IMR-90 (cell line): ENCODE measurements at regions of chr22 and their contacts with region 1.

Region 1: DNA sequence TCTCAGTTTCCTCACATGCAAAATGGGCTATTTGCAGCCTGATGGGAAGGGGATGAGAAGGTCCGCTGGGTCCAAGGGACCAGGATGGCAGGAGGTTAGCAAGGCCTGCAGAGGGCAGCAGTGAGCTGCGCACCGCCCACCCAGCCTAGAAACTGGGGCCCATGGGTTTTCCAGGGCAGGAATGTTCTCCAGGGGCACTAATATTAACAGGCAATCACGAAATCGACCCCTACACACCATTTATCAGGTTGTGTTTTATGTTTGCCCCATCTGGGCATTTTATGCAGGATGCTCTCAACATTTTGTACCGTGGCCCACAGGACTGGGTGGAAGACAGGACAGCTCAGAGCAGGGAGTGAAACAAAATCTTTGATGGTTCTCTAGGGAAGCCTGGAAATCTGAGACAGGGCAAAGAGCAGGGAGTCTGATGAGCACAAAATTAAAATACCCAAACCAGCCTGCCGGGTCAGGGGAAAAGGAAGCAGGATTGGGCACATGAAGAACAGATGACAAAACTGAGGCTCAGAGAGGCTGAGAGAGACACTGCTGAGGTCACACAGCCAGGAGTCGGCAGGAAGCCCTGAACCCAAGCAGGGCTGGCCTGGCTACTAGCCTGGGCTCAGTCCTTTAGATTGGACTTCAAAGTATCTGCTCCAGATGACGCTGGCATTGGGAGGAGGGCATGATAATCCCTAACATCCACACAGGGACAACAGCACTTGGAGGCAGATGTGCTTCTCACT is 1.6 kb upstream of the BCR start:
- DNase-seq: peak; percentile 38
- ATAC-seq: peak; percentile 53
- H3K4me3 ChIP-seq: no peak overlapping the region
- H3K27ac ChIP-seq: no peak overlapping the region
- H3K4me1 ChIP-seq: peaks cover 27% of the 10 kb centered on the region
- H3K27me3 ChIP-seq: no peaks in the 10 kb centered on the region
- CTCF ChIP-seq: peak; percentile 96
- POLR2A ChIP-seq: 0 out of 2 replicates have a peak, but pooled peaks have one; percentile 46
- RAD21 ChIP-seq: peak; percentile 99

Region 2: DNA sequence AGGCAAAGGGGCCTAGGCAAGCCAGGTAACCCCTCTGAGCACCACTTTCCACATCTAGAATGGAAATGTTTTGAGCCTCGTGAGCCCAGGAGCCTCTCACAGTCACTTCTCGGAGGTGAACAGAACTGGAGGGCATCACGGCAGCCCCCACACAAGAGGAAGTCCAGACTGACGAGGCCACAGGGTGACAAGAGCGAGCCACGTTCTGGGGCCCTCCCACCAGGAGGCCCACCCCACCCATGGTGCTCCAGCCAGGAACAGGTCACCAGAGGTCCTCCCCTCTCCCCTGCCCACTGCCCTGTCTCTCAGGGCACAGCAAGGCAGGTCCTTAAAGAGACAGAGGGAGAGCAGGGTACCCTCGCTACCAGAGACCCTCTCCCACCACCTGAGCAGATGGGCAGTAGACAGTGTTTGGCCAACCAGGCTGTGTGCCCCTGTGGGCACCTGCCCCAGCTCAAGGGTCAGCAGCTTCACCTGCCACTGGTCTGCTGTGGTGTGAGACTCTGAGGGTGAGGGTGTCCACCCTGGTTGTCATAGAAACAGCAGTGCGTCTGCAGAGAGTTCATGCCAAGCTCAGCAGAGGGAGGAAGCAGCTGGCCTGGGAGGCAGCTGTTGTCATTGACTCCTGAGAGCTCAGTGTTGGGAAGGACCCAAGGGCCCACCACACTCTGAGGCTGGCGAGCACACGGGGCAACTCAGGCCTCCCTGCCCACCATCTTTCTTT is 68.3 kb before region 1 on chr22:
- CTCF ChIA-PET with region 1: no interaction called
- POLR2A ChIA-PET with region 1: no interaction called
- dilution Hi-C with region 1: no loop called
- in situ Hi-C with region 1: no loop called
- intact Hi-C with region 1: no loop called
- DNase-seq: no peak
- ATAC-seq: no peak
- H3K4me3 ChIP-seq: no peak overlapping the region
- H3K27ac ChIP-seq: no peak overlapping the region
- H3K4me1 ChIP-seq: no peaks in the 10 kb centered on the region
- H3K27me3 ChIP-seq: peaks cover 6% of the 10 kb centered on the region; the same call in 1 of the 2 replicates
- CTCF ChIP-seq: no peak
- POLR2A ChIP-seq: no peak
- RAD21 ChIP-seq: no peak

Region 3: DNA sequence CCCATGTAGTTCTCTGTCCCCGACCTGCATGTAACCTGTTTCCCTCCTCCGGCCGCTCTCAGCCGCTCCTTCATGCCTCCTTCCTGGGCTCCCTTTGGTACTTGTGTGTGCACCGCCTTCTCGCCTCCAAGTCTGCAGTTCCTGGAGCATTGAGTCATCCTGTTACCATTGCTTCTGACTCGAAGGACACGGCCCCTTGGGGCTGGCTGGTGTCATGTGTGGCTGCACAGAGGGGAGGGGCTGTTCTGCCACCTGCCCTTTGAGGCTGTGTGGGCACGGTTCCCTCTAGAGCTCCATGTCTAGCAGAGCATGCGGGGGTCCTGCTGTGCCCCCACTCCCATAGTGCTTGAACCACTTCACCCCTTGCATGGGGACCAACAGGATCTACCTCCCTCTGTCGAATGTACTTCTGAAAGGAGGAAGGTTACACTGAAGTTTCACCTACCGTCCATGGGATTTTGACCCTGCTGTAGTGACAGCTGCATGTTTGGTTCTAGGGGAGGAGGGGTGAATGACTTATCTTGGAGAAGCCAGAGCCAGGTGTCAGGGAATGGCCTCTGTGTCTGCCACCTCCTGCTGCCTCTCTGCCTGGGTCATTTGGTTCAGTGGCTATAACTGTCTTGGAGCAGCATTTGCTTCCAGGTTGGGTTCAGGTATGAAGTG is 41.3 kb after region 1 on chr22:
- CTCF ChIA-PET with region 1: interaction called, 4 read pairs
- POLR2A ChIA-PET with region 1: no interaction called
- dilution Hi-C with region 1: no loop called
- in situ Hi-C with region 1: no loop called
- intact Hi-C with region 1: loop called (anchors 5 kb)
- DNase-seq: peak; percentile 61
- ATAC-seq: peak; percentile 32
- H3K4me3 ChIP-seq: no peak overlapping the region
- H3K27ac ChIP-seq: no peak overlapping the region; the same call in 1 of the 2 replicates
- H3K4me1 ChIP-seq: peaks cover 44% of the 10 kb centered on the region
- H3K27me3 ChIP-seq: no peaks in the 10 kb centered on the region
- CTCF ChIP-seq: no peak
- POLR2A ChIP-seq: no peak
- RAD21 ChIP-seq: no peak

Region 4: DNA sequence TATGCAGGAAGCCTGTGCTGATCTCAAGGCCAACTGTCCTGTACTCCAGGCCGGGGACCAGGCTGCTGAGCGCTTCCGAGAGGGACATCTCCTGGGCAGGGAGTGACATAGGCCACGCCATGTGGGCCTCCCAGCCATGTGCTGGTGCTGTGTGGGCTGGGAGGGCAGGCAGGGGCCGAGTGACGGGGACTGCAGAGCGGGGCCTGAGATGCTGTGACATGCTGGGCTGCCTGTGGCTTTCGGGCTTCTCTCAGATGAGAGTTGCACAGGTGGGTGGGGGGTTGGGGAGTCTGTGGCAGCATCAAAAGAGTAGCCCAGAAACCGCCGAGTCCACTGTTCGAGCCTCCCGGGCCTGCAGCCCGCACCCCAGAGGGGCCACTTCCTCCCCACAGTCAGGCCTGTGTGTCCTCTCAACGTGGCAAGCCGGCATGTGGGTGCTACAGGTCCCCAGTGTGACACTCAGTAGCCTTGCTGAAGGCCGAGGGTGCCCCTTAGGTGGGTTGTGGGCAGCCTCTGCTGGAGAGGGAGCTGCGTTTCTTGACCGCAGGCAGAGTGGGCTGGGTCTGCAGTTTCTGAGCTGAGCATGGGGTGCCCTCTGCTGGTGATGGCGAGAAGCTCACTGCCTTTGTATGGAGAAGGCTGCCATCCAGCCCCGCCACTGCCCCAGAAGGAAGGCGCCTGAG is 102.9 kb after region 1 on chr22:
- CTCF ChIA-PET with region 1: interaction called, 18 read pairs
- POLR2A ChIA-PET with region 1: no interaction called
- dilution Hi-C with region 1: no loop called
- in situ Hi-C with region 1: loop called (anchors 5 kb)
- intact Hi-C with region 1: loop called (anchors 1 kb)
- DNase-seq: peak; percentile 67
- ATAC-seq: peak; percentile 95
- H3K4me3 ChIP-seq: no peak overlapping the region
- H3K27ac ChIP-seq: no peak overlapping the region; the same call in 1 of the 2 replicates
- H3K4me1 ChIP-seq: peaks cover 5% of the 10 kb centered on the region; the same call in 1 of the 2 replicates
- H3K27me3 ChIP-seq: no peaks in the 10 kb centered on the region
- CTCF ChIP-seq: peak; percentile 95
- POLR2A ChIP-seq: 0 out of 2 replicates have a peak, but pooled peaks have one; percentile 50
- RAD21 ChIP-seq: peak; percentile 96

Region 5: DNA sequence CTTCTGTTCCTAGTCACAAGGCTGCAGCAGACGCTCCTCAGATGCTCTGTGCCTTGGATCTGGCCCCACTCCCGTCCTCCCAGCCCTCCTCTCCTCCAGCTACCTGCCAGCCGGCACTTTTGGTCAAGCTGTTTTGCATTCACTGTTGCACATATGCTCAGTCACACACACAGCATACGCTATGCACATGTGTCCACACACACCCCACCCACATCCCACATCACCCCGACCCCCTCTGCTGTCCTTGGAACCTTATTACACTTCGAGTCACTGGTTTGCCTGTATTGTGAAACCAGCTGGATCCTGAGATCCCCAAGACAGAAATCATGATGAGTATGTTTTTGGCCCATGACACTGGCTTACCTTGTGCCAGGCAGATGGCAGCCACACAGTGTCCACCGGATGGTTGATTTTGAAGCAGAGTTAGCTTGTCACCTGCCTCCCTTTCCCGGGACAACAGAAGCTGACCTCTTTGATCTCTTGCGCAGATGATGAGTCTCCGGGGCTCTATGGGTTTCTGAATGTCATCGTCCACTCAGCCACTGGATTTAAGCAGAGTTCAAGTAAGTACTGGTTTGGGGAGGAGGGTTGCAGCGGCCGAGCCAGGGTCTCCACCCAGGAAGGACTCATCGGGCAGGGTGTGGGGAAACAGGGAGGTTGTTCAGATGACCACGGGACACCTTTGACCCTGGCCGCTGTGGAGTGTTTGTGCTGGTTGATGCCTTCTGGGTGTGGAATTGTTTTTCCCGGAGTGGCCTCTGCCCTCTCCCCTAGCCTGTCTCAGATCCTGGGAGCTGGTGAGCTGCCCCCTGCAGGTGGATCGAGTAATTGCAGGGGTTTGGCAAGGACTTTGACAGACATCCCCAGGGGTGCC is 111.4 kb after region 1 on chr22:
- CTCF ChIA-PET with region 1: interaction called, 27 read pairs
- POLR2A ChIA-PET with region 1: no interaction called
- dilution Hi-C with region 1: no loop called
- in situ Hi-C with region 1: no loop called
- intact Hi-C with region 1: no loop called
- DNase-seq: peak; percentile 62
- ATAC-seq: peak; percentile 88
- H3K4me3 ChIP-seq: no peak overlapping the region
- H3K27ac ChIP-seq: no peak overlapping the region
- H3K4me1 ChIP-seq: no peaks in the 10 kb centered on the region
- H3K27me3 ChIP-seq: no peaks in the 10 kb centered on the region
- CTCF ChIP-seq: peak; percentile 64
- POLR2A ChIP-seq: no peak
- RAD21 ChIP-seq: peak; percentile 39

Region 6: GRCh38 chr22:23385291-23386244 is 206.9 kb after region 1 on chr22:
- CTCF ChIA-PET with region 1: interaction called, 3 read pairs
- POLR2A ChIA-PET with region 1: no interaction called
- dilution Hi-C with region 1: no loop called
- in situ Hi-C with region 1: loop called (anchors 10 kb)
- intact Hi-C with region 1: loop called (anchors 2 kb)
- DNase-seq: peak; percentile 71
- ATAC-seq: peak; percentile 98
- H3K4me3 ChIP-seq: no peak overlapping the region
- H3K27ac ChIP-seq: no peak overlapping the region
- H3K4me1 ChIP-seq: no peaks in the 10 kb centered on the region
- H3K27me3 ChIP-seq: peaks cover 3% of the 10 kb centered on the region; the same call in 1 of the 2 replicates
- CTCF ChIP-seq: peak; percentile 96
- POLR2A ChIP-seq: no peak
- RAD21 ChIP-seq: peak; percentile 93

Region 7: GRCh38 chr22:23395530-23396361 is 217.1 kb after region 1 on chr22:
- CTCF ChIA-PET with region 1: no interaction called
- POLR2A ChIA-PET with region 1: no interaction called
- dilution Hi-C with region 1: no loop called
- in situ Hi-C with region 1: loop called (anchors 10 kb)
- intact Hi-C with region 1: no loop called
- DNase-seq: no peak
- ATAC-seq: no peak
- H3K4me3 ChIP-seq: no peak overlapping the region
- H3K27ac ChIP-seq: no peak overlapping the region
- H3K4me1 ChIP-seq: no peaks in the 10 kb centered on the region
- H3K27me3 ChIP-seq: no peaks in the 10 kb centered on the region; the same call in 1 of the 2 replicates
- CTCF ChIP-seq: no peak
- POLR2A ChIP-seq: no peak
- RAD21 ChIP-seq: no peak